GM10248 (cell line): ENCODE measurements at regions of chr7 and their contacts with region 1.

Region 1: DNA sequence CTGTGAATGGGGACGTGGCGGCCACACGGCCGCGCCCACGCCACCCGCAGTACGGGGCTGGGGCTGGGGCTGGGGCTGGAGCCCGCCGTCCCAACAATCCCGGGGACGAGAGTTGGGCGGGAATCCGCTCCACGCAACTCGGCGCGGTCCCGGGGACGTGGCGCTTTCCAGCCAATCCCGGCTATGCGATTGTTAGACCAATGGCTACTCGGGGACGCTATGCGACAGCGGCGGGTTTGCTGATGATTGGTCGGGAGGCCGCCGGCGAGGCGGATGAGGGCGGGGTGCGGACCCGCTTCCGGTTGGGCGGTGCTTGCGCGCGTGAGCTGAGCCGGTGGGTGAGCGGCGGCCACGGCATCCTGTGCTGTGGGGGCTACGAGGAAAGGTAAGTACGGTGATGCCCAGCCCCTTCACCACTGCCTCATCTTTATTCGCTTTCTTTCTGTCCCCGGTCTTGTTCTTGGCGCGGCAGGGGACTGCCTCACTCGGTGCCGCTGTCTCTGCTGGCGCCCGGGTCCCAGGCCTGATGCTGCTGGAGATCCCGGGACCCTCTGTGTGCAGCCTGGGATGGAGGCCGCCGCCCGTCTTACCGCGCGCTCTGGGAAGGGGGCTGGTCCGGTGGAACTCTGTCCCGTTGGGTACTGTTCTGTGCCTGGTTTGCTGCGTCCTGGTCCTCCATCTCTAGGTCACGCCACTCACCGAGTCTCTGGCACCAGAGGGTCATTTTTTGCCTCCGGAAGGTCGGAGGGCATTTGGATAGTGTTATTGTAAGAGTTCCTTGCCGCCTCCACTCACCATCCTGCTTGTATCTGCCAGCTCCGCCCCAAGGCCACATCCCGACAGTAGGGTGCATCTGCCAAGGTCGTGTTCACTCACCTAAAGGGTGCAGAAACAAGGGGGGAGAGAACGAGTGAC is at the start of gene CALU:
- DNase-seq: peak; percentile 100
- CTCF ChIP-seq: no peak

Region 2: DNA sequence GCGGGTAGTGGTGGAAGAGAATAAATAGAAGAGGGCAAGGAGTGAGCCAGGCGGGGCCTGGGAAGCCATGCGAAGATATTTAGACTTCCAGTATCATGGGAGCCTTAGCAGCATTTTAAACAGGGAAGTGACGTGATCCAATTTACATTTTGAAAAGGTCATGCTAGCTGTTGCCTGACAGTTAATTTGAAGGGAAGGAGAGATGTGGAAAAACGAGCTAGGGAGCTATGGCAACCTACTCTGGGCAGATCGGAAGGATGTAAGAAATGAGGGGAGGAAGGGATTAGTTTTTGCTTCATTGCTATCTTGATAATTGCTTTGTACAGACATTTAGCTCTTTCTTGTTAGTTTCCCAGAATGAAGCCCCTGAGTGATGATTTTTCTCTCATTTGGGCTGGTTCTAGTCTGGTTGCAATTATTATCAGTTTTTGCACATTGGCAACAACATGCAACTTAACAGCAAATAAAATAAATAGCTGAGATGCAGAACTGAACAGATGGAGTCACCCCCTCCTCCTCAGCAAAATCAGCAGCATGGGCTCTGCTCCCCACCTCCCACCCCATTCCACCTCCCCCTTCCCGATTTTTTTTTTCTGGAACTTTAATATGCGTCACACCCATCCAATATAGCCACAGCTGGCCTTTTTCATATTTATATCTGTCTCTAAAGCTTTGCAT is 13.1 kb before region 1 on chr7:
- CTCF ChIA-PET with region 1: interaction called, 11 read pairs
- POLR2A ChIA-PET with region 1: no interaction called
- DNase-seq: no peak
- CTCF ChIP-seq: no peak

Region 3: DNA sequence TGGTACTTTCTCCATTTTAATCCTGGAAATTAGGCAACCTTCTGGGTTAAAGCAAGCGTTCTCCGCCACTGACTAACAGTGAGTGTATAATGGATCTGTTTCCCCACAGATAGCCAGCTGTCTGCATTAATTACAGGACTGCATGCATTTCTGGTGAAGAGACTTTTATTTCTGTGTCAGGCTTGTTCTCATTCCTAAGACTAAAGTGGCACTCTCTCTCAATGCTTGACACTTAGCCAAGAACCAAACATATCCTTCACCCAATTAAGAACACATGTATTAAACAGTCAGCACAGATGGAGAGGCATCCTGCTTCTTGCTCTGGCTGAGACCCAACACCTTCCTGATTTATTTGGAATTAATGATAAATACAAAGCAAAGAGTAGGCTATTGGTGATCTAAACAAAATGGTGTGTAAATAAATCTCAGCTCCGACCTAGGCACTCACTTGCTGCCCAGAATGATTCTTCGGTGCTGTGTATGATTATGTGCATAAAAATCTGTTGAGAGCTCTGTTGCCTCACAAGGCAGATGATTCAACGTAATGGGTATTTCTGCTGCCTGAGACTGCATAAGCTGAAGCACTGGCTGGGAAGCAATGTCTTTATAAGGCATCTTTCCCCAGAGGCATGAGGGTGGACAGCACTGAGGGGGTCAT is 16.6 kb after region 1 on chr7:
- CTCF ChIA-PET with region 1: interaction called, 48 read pairs
- POLR2A ChIA-PET with region 1: interaction called, 4 read pairs
- DNase-seq: no peak
- CTCF ChIP-seq: no peak